ENCODE measurements at regions of chr17 and their contacts with region 1.

Region 1: GRCh38 chr17:32944248-32945010 is 16.5 kb downstream of the TMEM98 start:
- DNase-seq: no peak
- H3K4me3 ChIP-seq: no peak overlapping the region
- H3K27ac ChIP-seq: no peak overlapping the region
- H3K4me1 ChIP-seq: peaks cover 10% of the 10 kb centered on the region
- H3K27me3 ChIP-seq: no peaks in the 10 kb centered on the region
- CTCF ChIP-seq: no peak
- EP300 ChIP-seq: no peak
- POLR2A ChIP-seq: no peak

Region 2: DNA sequence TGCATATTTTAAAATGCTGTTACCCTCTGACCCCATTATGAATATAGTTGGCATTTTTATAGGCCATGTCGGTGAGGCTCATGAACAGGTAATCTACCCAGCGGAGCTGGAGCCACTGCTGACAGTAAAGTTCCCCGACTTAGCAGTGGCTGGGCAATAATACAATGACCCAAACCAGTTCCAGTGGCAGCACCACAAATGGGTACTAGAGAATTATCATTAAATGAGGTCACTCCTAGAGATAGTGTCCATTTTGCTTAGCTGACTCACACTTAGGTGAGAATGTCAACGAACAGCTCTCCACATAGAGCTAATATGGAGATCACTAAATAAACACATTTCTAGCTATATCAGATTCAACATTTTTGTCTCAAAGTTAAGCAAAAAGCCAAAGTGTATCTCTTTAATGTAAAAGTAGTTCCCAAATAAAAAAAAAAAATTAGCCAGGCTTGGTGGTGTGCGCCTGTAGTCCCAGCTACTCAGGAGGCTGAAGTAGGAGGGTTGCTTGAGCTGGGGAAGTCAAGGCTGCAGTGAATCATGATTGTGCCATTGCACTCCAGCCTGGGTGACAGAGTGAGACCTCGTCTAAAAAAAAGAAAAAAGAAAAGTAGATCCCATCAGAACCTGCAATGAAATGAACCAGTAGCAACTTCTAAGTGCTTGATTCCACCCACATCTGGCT is 74.9 kb before region 1 on chr17:
- intact Hi-C with region 1: loop called in 1 of 4 experiments (anchors 5 kb)
- DNase-seq: no peak
- H3K4me3 ChIP-seq: no peak overlapping the region
- H3K27ac ChIP-seq: peak overlapping the region in 1 of 2 donors; percentile 9
- H3K4me1 ChIP-seq: peaks cover 15% of the 10 kb centered on the region
- H3K27me3 ChIP-seq: no peaks in the 10 kb centered on the region
- CTCF ChIP-seq: no peak
- EP300 ChIP-seq: no peak
- POLR2A ChIP-seq: no peak